ENCODE measurements at regions of chr9 and their contacts with region 1.

Region 1: DNA sequence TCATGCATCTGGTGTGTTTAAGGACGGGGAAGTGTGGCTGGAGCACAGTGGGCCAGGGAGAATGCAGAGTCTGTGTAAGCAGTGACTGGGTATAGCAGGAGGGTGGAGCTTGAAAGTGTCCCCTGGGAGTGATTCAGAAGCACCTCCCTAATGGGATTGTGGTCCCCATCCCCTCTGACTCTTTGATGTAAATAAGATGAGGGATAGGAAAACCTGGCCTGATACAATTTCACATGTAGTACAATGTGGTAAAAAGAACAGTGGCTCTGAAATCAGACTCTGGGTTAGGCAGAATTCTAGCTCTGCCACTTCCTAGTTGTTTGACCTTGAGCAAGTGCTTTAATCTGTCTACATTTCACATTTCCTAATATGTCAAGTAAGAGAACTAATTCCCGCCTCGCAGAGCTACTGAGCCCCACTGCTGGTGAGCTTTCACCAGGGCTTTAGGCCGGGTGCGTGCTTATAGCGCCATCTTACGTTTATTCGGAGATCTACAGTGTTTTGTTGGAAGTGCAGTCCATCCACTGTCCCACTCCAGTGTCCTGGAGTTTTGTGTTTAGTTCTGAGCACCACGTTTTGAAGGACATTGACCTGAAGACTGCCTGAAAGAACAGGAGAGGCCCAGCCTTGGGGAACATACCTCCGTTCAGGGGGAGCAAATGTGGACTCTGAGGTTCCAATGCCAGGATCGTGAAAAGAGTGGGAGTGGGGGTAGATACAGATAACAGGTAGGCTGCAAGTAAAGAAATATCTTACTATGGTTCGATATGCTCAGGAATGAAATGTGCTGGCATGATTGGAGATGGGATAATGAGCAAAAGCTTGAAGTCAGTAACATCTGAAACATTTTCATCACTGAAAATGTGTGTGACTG is 51.2 kb upstream of the TESK1 start:
- DNase-seq: peak; percentile 60 to 83
- ATAC-seq: peak; percentile 67 to 76 (median 73)
- H3K4me3 ChIP-seq: no peak overlapping the region
- H3K27ac ChIP-seq: peak overlapping the region; percentile 90
- H3K4me1 ChIP-seq: peaks cover 63% of the 10 kb centered on the region
- H3K27me3 ChIP-seq: no peaks in the 10 kb centered on the region
- CTCF ChIP-seq: peak; percentile 96

Region 2: GRCh38 chr9:35350827-35351549 is 202.9 kb before region 1 on chr9:
- intact Hi-C with region 1: no loop called
- DNase-seq: no peak
- ATAC-seq: peak in 1 of 4 donors; percentile 39
- H3K4me3 ChIP-seq: no peak overlapping the region
- H3K27ac ChIP-seq: no peak overlapping the region
- H3K4me1 ChIP-seq: no peaks in the 10 kb centered on the region
- H3K27me3 ChIP-seq: no peaks in the 10 kb centered on the region
- CTCF ChIP-seq: no peak

Region 3: DNA sequence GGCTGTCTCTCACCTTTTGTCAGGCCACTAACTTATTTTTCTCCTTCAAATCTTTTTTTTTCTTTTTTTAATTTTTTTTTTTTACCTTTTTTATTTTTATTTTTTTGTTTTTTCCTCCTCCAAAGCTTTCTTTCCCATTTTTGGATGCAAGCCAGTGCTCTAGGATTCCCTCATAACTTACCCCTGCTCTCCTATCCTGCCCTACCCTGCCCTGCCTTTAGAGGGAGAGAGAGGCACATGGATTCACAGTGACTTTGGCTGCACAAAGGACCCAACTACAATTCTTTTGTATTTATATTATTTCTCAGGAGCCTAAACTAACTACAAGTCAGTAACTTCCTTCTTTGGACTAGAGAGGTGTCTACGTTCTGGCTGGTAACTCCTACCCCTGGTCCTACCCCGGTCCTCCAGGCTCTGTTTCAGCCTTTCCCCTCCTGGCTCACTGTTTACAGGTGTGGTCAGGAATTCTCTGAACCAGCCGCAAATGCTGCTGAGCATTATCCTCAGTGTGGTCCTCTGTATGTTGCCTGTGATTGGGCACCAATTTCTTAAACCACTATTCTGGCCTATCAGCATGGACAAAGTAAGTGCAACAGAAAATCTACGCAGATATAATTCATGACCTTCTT is 72.4 kb before region 1 on chr9:
- intact Hi-C with region 1: loop called (anchors 1 to 2 kb)
- DNase-seq: peak in 1 of 2 donors; percentile 41
- ATAC-seq: peak; percentile 83 to 86 (median 85)
- H3K4me3 ChIP-seq: no peak overlapping the region
- H3K27ac ChIP-seq: no peak overlapping the region
- H3K4me1 ChIP-seq: no peaks in the 10 kb centered on the region
- H3K27me3 ChIP-seq: no peaks in the 10 kb centered on the region
- CTCF ChIP-seq: peak; percentile 79

Region 4: GRCh38 chr9:35518226-35518821 is 35.6 kb before region 1 on chr9:
- intact Hi-C with region 1: loop called (anchors 5 kb)
- DNase-seq: peak; percentile 37 to 57
- ATAC-seq: peak; percentile 51 to 77 (median 70)
- H3K4me3 ChIP-seq: peak overlapping the region; percentile 9
- H3K27ac ChIP-seq: peak overlapping the region; percentile 92
- H3K4me1 ChIP-seq: peaks cover 95% of the 10 kb centered on the region
- H3K27me3 ChIP-seq: no peaks in the 10 kb centered on the region
- CTCF ChIP-seq: no peak